CD8-positive, alpha-beta T cell (primary cell): ENCODE measurements at regions of chr19 and their contacts with region 1.

Region 1: DNA sequence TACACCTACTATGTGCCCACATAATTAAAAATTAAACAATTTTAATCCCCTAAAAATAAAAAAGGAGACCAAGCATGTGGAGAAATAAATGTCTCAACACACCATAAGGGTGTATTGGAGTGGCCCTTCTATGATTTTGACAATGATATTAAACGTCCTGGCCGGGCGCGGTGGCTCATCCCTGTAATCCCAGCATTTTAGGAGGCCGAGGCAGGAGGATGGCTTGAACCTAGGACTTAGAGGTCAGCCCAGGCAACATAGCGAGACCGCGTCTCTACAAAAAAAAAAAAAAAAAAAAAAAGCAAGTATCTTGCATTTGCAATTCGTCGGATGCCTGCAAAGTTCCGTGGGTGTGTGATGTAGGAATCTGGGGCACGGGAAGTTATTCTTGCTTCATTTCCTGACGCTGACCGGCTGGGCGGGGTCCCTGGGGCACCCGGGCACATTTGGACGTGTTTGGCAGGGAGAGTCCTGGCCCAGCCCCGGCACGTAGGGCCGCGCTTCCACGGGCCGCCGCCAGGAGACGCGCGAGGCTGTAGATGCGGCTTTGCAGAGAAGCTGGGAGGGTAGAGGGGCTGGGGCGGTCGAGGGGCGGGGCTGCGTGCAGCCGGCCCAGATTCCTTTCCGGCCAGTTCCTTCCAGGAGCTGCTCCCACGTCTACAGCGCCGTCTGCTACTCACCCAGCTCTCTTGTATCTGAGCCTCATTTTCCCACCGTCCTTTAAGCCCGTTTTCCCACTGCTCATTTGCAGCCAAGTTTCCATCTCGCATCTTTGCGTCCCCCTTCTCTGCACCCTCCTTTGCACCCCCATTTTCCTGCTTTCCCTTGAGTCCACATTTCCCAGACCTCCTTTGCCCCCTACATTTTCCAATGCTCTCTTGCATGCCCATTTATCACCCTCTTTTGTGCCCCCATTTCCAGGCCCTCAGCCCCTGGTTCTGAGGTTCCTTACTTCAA is 2.2 kb upstream of the TSPAN16 start:
- DNase-seq: peak; percentile 68 to 84 (median 76)
- ATAC-seq: peak; percentile 99
- H3K4me3 ChIP-seq: no peak overlapping the region
- H3K4me3 Mint-ChIP-seq: no peak overlapping the region
- H3K27ac ChIP-seq: no peak overlapping the region
- H3K27ac Mint-ChIP-seq: no peak overlapping the region
- H3K4me1 ChIP-seq: peaks cover 8% of the 10 kb centered on the region
- H3K4me1 Mint-ChIP-seq: peaks cover 4% of the 10 kb centered on the region
- H3K27me3 ChIP-seq: peaks cover 0 to 12% of the 10 kb centered on the region in 2 experiments
- H3K27me3 Mint-ChIP-seq: peaks cover 24% of the 10 kb centered on the region
- CTCF ChIP-seq: peak; percentile 90

Region 2: GRCh38 chr19:11164879-11165406 is 128.8 kb before region 1 on chr19:
- CTCF ChIA-PET with region 1: no interaction called
- POLR2A ChIA-PET with region 1: no interaction called
- intact Hi-C with region 1: no loop called
- DNase-seq: no peak
- ATAC-seq: no peak
- H3K4me3 ChIP-seq: no peak overlapping the region
- H3K4me3 Mint-ChIP-seq: no peak overlapping the region
- H3K27ac ChIP-seq: no peak overlapping the region
- H3K27ac Mint-ChIP-seq: no peak overlapping the region
- H3K4me1 ChIP-seq: no peaks in the 10 kb centered on the region
- H3K4me1 Mint-ChIP-seq: no peaks in the 10 kb centered on the region
- H3K27me3 ChIP-seq: no peaks in the 10 kb centered on the region
- H3K27me3 Mint-ChIP-seq: peaks cover 2% of the 10 kb centered on the region
- CTCF ChIP-seq: no peak

Region 3: GRCh38 chr19:11446652-11447301 is 153.1 kb after region 1 on chr19:
- CTCF ChIA-PET with region 1: interaction called, 3 read pairs
- POLR2A ChIA-PET with region 1: no interaction called
- intact Hi-C with region 1: loop called (anchors 1 kb)
- DNase-seq: peak in 7 of 9 experiments; percentile 30 to 65 (median 53)
- ATAC-seq: peak; percentile 69
- H3K4me3 ChIP-seq: no peak overlapping the region
- H3K4me3 Mint-ChIP-seq: no peak overlapping the region
- H3K27ac ChIP-seq: no peak overlapping the region
- H3K27ac Mint-ChIP-seq: no peak overlapping the region
- H3K4me1 ChIP-seq: no peaks in the 10 kb centered on the region
- H3K4me1 Mint-ChIP-seq: peaks cover 2% of the 10 kb centered on the region
- H3K27me3 ChIP-seq: no peaks in the 10 kb centered on the region
- H3K27me3 Mint-ChIP-seq: no peaks in the 10 kb centered on the region
- CTCF ChIP-seq: peak; percentile 56